Activated B cell treated with CpG ODN at 0.5 μM for 24 hours (primary cell): ENCODE measurements at regions of chr7 and their contacts with region 1.

Region 1: DNA sequence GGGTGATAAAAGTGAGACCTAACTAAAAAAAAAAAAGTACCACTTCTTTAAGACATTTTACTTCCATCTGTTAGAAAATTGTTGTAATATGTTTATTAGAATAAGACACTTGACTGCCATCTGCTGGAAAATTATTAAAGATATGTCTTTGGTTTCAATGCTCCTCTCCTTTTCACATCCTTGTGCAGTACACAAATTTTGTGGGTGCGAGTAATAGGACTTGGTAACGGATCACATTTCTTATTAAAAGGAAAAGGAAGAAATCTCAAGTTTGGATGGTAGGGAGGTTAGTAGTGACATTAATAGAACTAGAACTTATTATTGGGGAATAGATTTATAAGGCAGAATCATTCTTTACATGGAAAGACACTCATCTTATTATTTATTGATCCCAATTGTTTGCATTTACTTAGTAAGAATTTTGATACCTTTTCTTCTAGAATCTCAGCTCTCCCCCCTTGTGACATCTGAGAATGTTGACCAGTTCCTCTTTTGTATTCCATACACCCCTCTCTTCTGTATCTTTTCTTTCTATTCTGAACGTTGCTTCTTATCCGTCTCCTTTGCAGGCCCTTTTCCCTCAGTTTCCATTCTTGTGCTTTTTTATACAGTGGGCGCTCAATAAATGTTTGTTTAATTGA is 43.1 kb upstream of the RPA3 start:
- DNase-seq: no peak
- ATAC-seq: peak; percentile 60
- H3K4me3 Mint-ChIP-seq: peak overlapping the region; percentile 88
- H3K27ac Mint-ChIP-seq: peak overlapping the region; percentile 87
- H3K4me1 Mint-ChIP-seq: peaks cover 34% of the 10 kb centered on the region
- H3K27me3 Mint-ChIP-seq: no peaks in the 10 kb centered on the region
- CTCF ChIP-seq: no peak

Region 2: DNA sequence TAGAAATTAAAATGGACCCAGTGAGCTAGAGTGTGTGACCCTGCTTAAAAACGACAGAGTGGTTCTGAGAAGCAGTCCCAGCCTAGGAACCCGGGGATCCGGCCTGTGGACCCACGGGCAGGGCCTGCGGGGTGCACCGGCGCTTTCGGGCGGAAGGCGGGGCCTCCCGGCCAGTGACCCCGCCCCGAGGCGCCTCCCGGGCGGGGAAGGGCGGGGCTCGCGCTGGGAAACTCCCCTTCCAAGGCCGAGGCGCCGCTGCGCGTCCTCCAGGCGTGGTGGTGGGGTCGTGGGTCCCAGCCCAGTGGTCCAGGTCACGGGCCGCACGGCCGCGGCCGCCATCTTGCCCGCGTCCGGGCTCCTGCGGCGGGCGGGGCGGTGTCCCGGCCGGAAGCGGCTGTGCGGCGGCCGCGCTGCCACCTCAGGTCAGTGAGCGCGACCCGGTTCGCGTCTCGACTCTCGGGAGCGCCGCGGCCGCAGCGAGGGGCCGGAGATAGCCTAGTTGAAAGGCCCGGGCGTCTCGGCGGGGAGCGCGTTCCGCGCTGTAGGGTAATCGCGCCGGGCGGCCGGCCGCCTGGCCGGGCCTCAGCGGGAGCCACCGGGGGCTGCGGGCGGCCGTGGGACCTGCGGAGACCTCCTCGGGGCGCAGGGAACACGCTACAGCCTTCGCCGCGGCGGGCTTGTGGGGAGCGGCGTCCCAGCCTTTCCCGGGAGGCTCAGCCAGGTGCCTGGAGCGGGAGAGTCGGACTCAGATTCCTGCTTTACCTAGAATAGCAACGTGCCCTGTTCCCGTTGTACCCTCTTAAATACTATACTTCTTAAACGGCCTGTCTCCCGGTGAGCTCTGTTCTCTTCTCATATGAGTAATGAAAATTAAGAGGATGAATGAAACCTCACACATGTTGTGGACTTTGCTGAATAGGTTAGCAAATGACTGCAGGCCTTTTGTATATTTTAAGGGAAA is 194.5 kb before region 1 on chr7 and contains the start of gene MIOS:
- CTCF ChIA-PET with region 1: no interaction called
- POLR2A ChIA-PET with region 1: no interaction called
- intact Hi-C with region 1: loop called (anchors 5 kb)
- DNase-seq: peak; percentile 85
- ATAC-seq: peak; percentile 83
- H3K4me3 Mint-ChIP-seq: peak within 1 kb of the TSS; percentile 85
- H3K27ac Mint-ChIP-seq: peak within 1 kb of the TSS; percentile 90
- H3K4me1 Mint-ChIP-seq: peaks cover 35% of the 10 kb centered on the region
- H3K27me3 Mint-ChIP-seq: no peaks in the 10 kb centered on the region
- CTCF ChIP-seq: no peak
- total RNA-seq, gene MIOS: 70.2 and 81.3 TPM in 2 replicates

Region 3: GRCh38 chr7:7640221-7641128 is 121.0 kb before region 1 on chr7 and contains the start of gene UMAD1:
- CTCF ChIA-PET with region 1: no interaction called
- POLR2A ChIA-PET with region 1: interaction called, 4 read pairs
- intact Hi-C with region 1: loop called (anchors 5 kb)
- DNase-seq: peak; percentile 92
- ATAC-seq: peak; percentile 88
- H3K4me3 Mint-ChIP-seq: peak within 1 kb of the TSS; percentile 97
- H3K27ac Mint-ChIP-seq: peak within 1 kb of the TSS; percentile 97
- H3K4me1 Mint-ChIP-seq: peaks cover 38% of the 10 kb centered on the region
- H3K27me3 Mint-ChIP-seq: no peaks in the 10 kb centered on the region
- CTCF ChIP-seq: no peak
- total RNA-seq, gene UMAD1: 13.9 and 15.4 TPM in 2 replicates

Region 4: GRCh38 chr7:7746458-7746857 is 15.0 kb before region 1 on chr7:
- CTCF ChIA-PET with region 1: no interaction called
- POLR2A ChIA-PET with region 1: no interaction called
- intact Hi-C with region 1: loop called (anchors 2 kb)
- DNase-seq: no peak
- ATAC-seq: no peak
- H3K4me3 Mint-ChIP-seq: no peak overlapping the region
- H3K27ac Mint-ChIP-seq: no peak overlapping the region
- H3K4me1 Mint-ChIP-seq: peaks cover 20% of the 10 kb centered on the region
- H3K27me3 Mint-ChIP-seq: no peaks in the 10 kb centered on the region
- CTCF ChIP-seq: no peak

Region 5: GRCh38 chr7:7816084-7816483 is 54.6 kb after region 1 on chr7:
- CTCF ChIA-PET with region 1: no interaction called
- POLR2A ChIA-PET with region 1: no interaction called
- intact Hi-C with region 1: loop called (anchors 2 kb)
- DNase-seq: no peak
- ATAC-seq: peak; percentile 56
- H3K4me3 Mint-ChIP-seq: peak overlapping the region; percentile 67
- H3K27ac Mint-ChIP-seq: peak overlapping the region; percentile 82
- H3K4me1 Mint-ChIP-seq: peaks cover 71% of the 10 kb centered on the region
- H3K27me3 Mint-ChIP-seq: no peaks in the 10 kb centered on the region
- CTCF ChIP-seq: no peak

Region 6: DNA sequence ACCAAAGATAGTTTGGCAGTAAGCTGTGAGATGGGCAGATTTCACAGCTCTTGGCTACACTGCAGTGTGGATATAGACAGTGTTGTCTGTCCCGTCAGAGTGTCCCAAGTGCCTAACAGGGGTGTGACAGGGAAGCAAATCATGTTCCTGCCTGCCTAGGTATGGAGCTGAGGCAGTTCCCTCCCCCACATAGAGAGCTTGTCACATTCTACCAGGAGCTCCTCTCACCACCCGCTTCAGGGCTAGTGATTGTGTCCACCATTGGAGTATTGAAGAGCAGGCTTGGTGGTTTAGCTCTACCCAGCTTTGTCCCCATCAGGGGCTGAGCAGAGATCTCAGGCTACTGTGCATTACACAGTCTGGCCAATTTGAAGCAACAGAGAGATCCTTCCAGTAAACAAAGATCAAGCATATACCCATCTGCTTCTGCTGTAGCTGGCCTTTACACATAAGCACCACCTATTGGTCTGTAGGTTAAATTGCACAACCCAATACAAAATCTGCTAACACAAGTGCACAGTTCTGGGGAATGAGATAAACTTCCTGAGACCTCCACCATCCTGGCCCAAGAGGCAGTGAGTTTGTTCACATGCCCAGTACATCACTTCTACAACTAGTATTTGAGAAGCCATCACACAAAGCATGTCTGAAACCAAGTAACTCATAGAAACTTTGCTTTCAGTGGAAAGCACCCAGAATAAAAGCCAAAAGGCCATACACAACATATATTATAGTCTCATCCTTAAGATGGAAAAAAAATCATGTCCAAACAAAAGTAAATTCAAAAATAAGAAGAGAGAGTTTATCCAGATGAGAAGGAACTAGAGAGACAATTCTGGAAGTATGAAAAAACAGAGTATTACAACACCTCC is 274.4 kb after region 1 on chr7:
- CTCF ChIA-PET with region 1: interaction called, 8 read pairs
- POLR2A ChIA-PET with region 1: no interaction called
- intact Hi-C with region 1: loop called (anchors 5 kb)
- DNase-seq: no peak
- ATAC-seq: peak; percentile 92
- H3K4me3 Mint-ChIP-seq: no peak overlapping the region
- H3K27ac Mint-ChIP-seq: peak overlapping the region; percentile 21
- H3K4me1 Mint-ChIP-seq: peaks cover 10% of the 10 kb centered on the region
- H3K27me3 Mint-ChIP-seq: no peaks in the 10 kb centered on the region
- CTCF ChIP-seq: no peak

Region 7: DNA sequence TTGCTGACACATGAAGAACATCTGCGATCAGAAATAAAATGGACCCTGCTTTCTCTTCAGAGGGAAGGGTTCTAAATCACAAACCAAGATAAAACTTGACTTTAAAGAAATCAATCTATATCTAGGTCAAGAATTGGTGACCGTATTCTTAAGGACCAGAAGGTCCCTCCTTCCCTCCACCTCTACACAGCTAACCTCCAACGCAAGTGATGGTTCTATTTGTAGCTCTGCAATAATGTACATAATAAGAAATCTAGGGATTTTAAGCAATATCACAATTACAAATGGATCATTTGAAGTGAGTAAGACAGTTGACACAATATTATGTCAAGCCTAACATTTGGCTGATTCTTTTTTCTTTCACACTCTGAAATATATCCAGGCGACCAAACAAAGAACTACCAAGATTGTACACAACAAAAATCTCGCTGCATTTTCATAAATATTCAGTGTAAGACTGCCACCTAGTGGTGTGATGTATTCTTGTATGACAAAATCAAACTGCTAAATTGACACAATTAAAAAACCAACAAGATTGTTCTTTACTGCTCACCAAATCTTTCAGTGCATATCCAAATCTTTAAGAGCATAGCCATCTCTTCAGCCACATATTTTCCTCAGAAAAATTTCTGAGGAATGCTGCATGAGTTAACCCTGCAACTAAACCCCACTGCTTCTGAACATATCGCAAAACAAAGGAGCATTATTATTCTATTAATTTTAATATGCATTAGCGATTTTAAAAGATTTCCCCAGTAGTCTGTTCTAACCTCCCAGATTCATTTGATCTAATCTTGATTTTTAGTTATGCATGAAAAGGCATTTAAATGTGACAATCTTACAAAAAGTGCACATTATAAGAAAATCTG is 456.0 kb after region 1 on chr7:
- CTCF ChIA-PET with region 1: no interaction called
- POLR2A ChIA-PET with region 1: no interaction called
- intact Hi-C with region 1: loop called (anchors 1 kb)
- DNase-seq: no peak
- ATAC-seq: no peak
- H3K4me3 Mint-ChIP-seq: no peak overlapping the region
- H3K27ac Mint-ChIP-seq: no peak overlapping the region
- H3K4me1 Mint-ChIP-seq: no peaks in the 10 kb centered on the region
- H3K27me3 Mint-ChIP-seq: no peaks in the 10 kb centered on the region
- CTCF ChIP-seq: no peak